Activated CD4-positive, alpha-beta memory T cell treated with anti-CD3 and anti-CD28 coated beads for 36 hours (primary cell): ENCODE measurements at regions of chr11 and their contacts with region 1.

Region 1: DNA sequence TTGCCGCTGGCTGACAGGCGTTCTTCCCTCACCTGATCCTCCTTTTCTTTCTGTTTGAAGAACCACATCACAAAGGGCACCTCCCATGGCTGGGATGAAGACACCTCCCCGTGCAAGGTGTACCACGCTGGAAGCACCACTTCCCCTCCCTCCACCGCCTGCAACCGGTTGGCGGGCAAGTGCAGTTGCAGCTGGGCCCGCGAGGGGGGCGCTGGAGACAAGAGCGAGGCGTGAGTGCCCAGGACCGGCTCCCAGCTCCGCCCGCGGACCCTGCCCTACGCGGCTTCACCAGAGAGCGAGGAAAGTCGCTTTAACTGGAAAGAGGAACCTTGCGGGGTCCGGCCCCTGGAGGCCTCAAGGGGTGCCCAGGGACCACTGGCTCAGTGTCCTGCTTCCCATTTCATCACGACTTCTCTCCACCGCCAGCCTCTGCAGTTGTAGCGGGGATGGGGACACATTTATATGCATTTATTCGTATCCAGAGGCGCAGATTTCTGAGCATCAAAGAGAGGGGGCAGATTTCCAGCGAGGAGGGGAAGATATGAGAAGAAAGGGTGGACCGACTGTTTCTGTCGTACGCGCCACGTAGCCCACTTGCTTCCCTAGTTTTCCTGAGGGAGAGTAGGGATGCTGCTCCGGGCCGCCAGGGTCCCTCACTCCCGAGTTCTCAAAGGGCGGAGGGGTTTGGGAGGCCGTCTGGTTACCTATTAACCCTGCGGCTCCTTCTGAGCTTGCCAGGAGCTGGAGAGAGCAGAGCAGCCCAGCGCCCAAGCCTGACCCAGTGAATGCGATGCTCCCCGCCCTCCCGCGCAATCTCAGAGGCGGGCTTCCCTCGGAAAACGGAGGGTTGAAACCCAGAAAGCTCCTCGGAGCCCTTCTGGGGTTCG is 3.5 kb downstream of the ESAM start:
- DNase-seq: peak; percentile 83
- H3K4me3 Mint-ChIP-seq: peak overlapping the region; percentile 54
- H3K27ac Mint-ChIP-seq: peak overlapping the region; percentile 35
- H3K4me1 Mint-ChIP-seq: peaks cover 19% of the 10 kb centered on the region
- H3K27me3 Mint-ChIP-seq: peaks cover 50% of the 10 kb centered on the region

Region 2: GRCh38 chr11:124402326-124402922 is 356.1 kb before region 1 on chr11:
- CTCF ChIA-PET with region 1: no interaction called
- POLR2A ChIA-PET with region 1: no interaction called
- intact Hi-C with region 1: loop called (anchors 5 kb)
- DNase-seq: peak; percentile 71
- H3K4me3 Mint-ChIP-seq: no peak overlapping the region
- H3K27ac Mint-ChIP-seq: no peak overlapping the region
- H3K4me1 Mint-ChIP-seq: peaks cover 2% of the 10 kb centered on the region
- H3K27me3 Mint-ChIP-seq: no peaks in the 10 kb centered on the region

Region 3: GRCh38 chr11:124739479-124740276 is 18.9 kb before region 1 on chr11 and contains the start of gene NRGN:
- CTCF ChIA-PET with region 1: interaction called, 107 read pairs
- POLR2A ChIA-PET with region 1: no interaction called
- intact Hi-C with region 1: loop called (anchors 1 kb)
- DNase-seq: peak; percentile 91
- H3K4me3 Mint-ChIP-seq: peak within 1 kb of the TSS; percentile 79
- H3K27ac Mint-ChIP-seq: no peak within 1 kb of the TSS
- H3K4me1 Mint-ChIP-seq: peaks cover 10% of the 10 kb centered on the region
- H3K27me3 Mint-ChIP-seq: peaks cover 3% of the 10 kb centered on the region
- total RNA-seq, gene NRGN: 15.3 to 17.0 TPM

Region 4: GRCh38 chr11:124778281-124778680 is 19.7 kb after region 1 on chr11:
- CTCF ChIA-PET with region 1: interaction called, 29 read pairs
- POLR2A ChIA-PET with region 1: no interaction called
- intact Hi-C with region 1: no loop called
- DNase-seq: no peak
- H3K4me3 Mint-ChIP-seq: no peak overlapping the region
- H3K27ac Mint-ChIP-seq: no peak overlapping the region
- H3K4me1 Mint-ChIP-seq: peaks cover 10% of the 10 kb centered on the region
- H3K27me3 Mint-ChIP-seq: no peaks in the 10 kb centered on the region

Region 5: GRCh38 chr11:124800226-124800929 is 41.8 kb after region 1 on chr11 and contains the start of gene MSANTD2:
- CTCF ChIA-PET with region 1: interaction called, 51 read pairs
- POLR2A ChIA-PET with region 1: interaction called, 3 read pairs
- intact Hi-C with region 1: loop called (anchors 1 kb)
- DNase-seq: peak; percentile 87
- H3K4me3 Mint-ChIP-seq: peak within 1 kb of the TSS; percentile 89
- H3K27ac Mint-ChIP-seq: peak within 1 kb of the TSS; percentile 94
- H3K4me1 Mint-ChIP-seq: peaks cover 29% of the 10 kb centered on the region
- H3K27me3 Mint-ChIP-seq: no peaks in the 10 kb centered on the region
- total RNA-seq, gene MSANTD2: 6.1 to 6.4 TPM

Region 6: DNA sequence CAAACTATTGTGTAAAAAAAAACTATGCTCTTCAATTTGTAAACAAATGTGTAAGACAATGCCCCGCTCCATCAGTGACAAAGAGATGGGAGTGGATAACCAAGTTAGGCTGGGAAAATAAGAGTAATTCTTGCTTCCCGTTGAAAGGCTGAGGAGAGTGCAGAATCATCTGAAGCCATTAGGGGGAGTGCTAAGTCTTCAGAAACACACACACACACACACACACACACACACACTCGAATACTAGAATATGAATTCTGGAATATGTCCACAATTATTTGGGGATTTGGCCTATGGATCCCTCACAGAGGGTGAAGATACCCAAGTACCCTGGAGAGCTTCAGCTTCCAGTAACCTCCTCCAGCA is 78.9 kb after region 1 on chr11:
- CTCF ChIA-PET with region 1: interaction called, 44 read pairs
- POLR2A ChIA-PET with region 1: no interaction called
- intact Hi-C with region 1: loop called (anchors 2 kb)
- DNase-seq: no peak
- H3K4me3 Mint-ChIP-seq: no peak overlapping the region
- H3K27ac Mint-ChIP-seq: no peak overlapping the region
- H3K4me1 Mint-ChIP-seq: peaks cover 9% of the 10 kb centered on the region
- H3K27me3 Mint-ChIP-seq: peaks cover 49% of the 10 kb centered on the region

Region 7: GRCh38 chr11:124875943-124876817 is 117.6 kb after region 1 on chr11:
- CTCF ChIA-PET with region 1: interaction called, 7 read pairs
- POLR2A ChIA-PET with region 1: no interaction called
- intact Hi-C with region 1: loop called (anchors 5 kb)
- DNase-seq: peak; percentile 85
- H3K4me3 Mint-ChIP-seq: peak overlapping the region; percentile 77
- H3K27ac Mint-ChIP-seq: peak overlapping the region; percentile 61
- H3K4me1 Mint-ChIP-seq: peaks cover 13% of the 10 kb centered on the region
- H3K27me3 Mint-ChIP-seq: peaks cover 15% of the 10 kb centered on the region